Endothelial cell of umbilical vein (primary cell): ENCODE measurements at regions of chr20 and their contacts with region 1.

Region 1: DNA sequence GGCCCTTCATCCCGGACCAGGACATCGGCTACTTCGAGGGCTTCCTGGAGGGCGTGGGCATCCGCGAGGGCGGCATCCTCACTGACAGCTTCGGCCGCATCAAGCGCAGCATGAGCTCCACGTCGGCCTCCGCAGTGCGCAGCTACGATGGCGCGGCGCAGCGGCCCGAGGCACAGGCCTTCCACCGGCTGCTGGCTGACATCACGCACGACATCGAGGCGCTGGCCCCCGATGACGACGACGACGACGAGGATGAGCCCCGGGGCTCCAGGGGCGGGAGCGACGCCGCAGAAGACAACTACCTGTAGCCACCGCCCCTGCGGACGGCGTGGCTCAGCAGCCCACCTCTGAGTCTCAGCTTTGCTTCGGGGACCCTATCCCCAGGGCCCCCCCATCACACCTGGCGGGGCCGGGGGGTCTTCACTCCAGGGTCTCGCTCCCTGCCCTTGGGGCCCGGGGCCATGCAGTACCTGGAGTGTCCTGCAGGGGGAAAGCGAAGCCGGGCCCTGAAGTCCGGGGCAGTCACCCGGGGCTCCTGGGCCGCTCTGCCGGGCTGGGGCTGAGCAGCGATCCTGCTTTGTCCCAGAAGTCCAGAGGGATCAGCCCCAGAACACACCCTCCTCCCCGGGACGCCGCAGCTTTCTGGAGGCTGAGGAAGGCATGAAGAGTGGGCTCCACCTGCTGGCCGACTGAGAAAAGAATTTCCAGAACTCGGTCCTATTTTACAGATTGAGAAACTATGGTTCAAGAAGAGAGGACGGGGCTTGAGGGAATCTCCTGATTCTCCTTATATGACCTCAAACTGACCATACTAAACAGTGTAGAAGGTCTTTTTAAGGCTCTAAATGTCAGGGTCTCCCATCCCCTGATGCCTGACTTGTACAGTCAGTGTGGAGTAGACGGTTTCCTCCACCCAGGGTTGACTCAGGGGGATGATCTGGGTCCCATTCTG is 20.8 kb upstream of the HCK start:
- DNase-seq: peak; percentile 67
- H3K4me3 ChIP-seq: no peak overlapping the region
- H3K27ac ChIP-seq: no peak overlapping the region
- H3K4me1 ChIP-seq: no peaks in the 10 kb centered on the region
- H3K27me3 ChIP-seq: peaks cover 3 to 12% of the 10 kb centered on the region in 2 experiments
- CTCF ChIP-seq: peak; percentile 88 to 89
- POLR2A ChIP-seq: no peak

Region 2: DNA sequence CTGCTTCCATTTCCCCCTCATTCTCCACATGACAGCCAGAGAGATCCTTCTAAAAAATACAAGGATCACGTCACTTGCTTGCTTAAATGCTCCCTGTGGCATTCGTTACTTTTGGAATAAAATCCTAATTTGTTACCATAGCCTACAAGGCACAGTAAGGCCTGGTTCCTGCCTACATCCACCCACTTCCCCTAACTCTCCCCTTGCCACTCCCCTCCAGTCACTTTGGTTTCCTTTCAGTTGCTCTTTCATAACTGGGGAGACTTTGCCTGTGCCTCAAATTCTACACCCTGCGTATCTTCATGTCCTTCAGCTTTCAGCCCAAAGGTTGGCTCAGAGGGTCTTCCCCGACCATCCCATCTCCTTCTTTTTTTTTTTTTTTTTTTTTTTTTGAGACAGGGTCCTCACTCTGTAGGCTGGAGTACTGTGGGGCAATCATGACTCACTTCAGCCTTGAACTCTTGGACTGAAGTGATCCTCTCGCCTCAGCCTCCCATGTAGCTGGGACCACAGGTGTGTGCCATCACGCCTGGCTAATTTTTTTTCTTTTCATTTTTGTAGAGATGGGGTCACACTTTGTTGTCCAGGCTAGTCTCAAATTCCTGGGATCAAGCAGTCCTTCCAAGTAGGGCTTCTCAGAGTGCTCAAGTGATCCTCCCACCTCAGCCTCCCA is 413.7 kb before region 1 on chr20:
- CTCF ChIA-PET with region 1: no interaction called
- POLR2A ChIA-PET with region 1: no interaction called
- dilution Hi-C with region 1: no loop called
- intact Hi-C with region 1: no loop called
- DNase-seq: no peak
- H3K4me3 ChIP-seq: no peak overlapping the region
- H3K27ac ChIP-seq: no peak overlapping the region
- H3K4me1 ChIP-seq: peaks cover 4% of the 10 kb centered on the region
- H3K27me3 ChIP-seq: no peaks in the 10 kb centered on the region
- CTCF ChIP-seq: no peak
- POLR2A ChIP-seq: no peak

Region 3: DNA sequence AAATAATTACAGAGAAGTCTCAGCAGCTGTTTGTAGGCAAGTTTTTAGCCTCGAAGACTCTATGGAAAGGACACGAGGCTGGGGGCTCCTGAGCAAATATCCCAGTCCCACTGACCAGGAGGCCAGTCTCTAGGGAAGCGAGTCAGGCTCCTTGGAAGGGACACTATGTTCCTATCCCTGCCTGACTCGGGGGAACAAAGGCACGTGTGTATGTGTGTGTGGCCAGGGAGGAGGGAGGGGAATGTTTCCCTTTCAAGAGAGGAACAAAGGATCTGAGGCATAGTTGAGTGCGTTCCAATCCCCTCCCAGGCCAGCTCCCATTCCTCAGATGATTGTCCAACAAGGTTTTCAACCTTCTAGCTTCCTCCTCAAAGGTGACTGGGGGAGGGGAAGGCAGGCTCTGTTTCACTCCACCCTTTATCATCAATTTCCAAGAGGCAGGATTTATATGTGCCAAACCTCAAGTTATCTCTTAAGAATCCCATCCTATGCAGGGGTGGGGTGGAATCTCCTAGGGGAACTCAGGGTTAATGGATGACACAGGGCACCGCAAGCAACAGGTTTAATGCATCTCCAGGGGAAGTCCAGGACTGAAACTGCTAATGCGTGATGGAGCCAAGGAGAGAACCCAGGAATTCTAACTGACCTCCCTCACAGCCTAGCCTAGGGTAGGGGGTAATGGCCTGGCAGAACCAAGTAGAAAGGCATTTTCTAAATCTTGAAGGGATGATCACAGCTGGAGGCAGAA is 318.5 kb before region 1 on chr20:
- CTCF ChIA-PET with region 1: no interaction called
- POLR2A ChIA-PET with region 1: no interaction called
- dilution Hi-C with region 1: no loop called
- intact Hi-C with region 1: no loop called
- DNase-seq: peak; percentile 91
- H3K4me3 ChIP-seq: peak overlapping the region in 1 of 3 experiments; percentile 26
- H3K27ac ChIP-seq: peak overlapping the region; percentile 97
- H3K4me1 ChIP-seq: peaks cover 55% of the 10 kb centered on the region
- H3K27me3 ChIP-seq: no peaks in the 10 kb centered on the region
- CTCF ChIP-seq: no peak
- POLR2A ChIP-seq: no peak

Region 4: GRCh38 chr20:31849455-31849925 is 181.8 kb before region 1 on chr20:
- CTCF ChIA-PET with region 1: interaction called, 243 read pairs
- POLR2A ChIA-PET with region 1: no interaction called
- dilution Hi-C with region 1: no loop called
- intact Hi-C with region 1: loop called (anchors 1 kb)
- DNase-seq: no peak
- H3K4me3 ChIP-seq: no peak overlapping the region
- H3K27ac ChIP-seq: no peak overlapping the region
- H3K4me1 ChIP-seq: no peaks in the 10 kb centered on the region
- H3K27me3 ChIP-seq: peaks cover 18 to 19% of the 10 kb centered on the region in 2 experiments
- CTCF ChIP-seq: no peak
- POLR2A ChIP-seq: no peak

Region 5: GRCh38 chr20:31990641-31991338 is 40.5 kb before region 1 on chr20:
- CTCF ChIA-PET with region 1: interaction called, 13 read pairs
- POLR2A ChIA-PET with region 1: no interaction called
- dilution Hi-C with region 1: no loop called
- intact Hi-C with region 1: no loop called
- DNase-seq: no peak
- H3K4me3 ChIP-seq: no peak overlapping the region
- H3K27ac ChIP-seq: no peak overlapping the region
- H3K4me1 ChIP-seq: peaks cover 5% of the 10 kb centered on the region
- H3K27me3 ChIP-seq: peaks cover 23 to 31% of the 10 kb centered on the region in 2 experiments
- CTCF ChIP-seq: no peak
- POLR2A ChIP-seq: no peak

Region 6: GRCh38 chr20:32018269-32019074 is 12.8 kb before region 1 on chr20:
- CTCF ChIA-PET with region 1: interaction called, 36 read pairs
- POLR2A ChIA-PET with region 1: no interaction called
- dilution Hi-C with region 1: no loop called
- intact Hi-C with region 1: no loop called
- DNase-seq: peak; percentile 66
- H3K4me3 ChIP-seq: peak overlapping the region; percentile 49 to 64 (median 53)
- H3K27ac ChIP-seq: no peak overlapping the region
- H3K4me1 ChIP-seq: peaks cover 6% of the 10 kb centered on the region
- H3K27me3 ChIP-seq: no peaks in the 10 kb centered on the region
- CTCF ChIP-seq: peak in 1 of 2 donors; percentile 2
- POLR2A ChIP-seq: no peak

Region 7: DNA sequence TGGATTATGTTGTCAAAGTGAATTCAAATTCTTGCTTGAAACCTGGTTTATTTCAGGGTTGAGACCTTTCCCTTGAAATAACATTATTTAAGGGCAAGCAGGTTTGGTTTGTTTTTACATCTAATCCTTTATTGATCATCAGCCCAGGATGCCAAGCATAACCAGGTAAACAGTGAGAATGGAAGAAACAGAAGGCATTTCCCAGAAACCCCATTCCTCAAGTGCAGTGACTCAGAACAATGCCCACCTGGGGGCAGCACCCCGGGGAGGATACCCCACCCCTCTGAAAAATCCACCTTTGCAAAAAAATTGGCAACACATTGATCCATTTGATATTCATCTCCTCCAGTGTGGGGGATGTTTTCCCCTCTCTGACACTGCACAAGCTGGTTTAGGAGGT is 208.9 kb after region 1 on chr20:
- CTCF ChIA-PET with region 1: no interaction called
- POLR2A ChIA-PET with region 1: no interaction called
- dilution Hi-C with region 1: no loop called
- intact Hi-C with region 1: no loop called
- DNase-seq: no peak
- H3K4me3 ChIP-seq: no peak overlapping the region
- H3K27ac ChIP-seq: no peak overlapping the region
- H3K4me1 ChIP-seq: no peaks in the 10 kb centered on the region
- H3K27me3 ChIP-seq: no peaks in the 10 kb centered on the region
- CTCF ChIP-seq: no peak
- POLR2A ChIP-seq: no peak